Activated CD4-positive, alpha-beta T cell treated with anti-CD3 and anti-CD28 coated beads for 36 hours (primary cell): ENCODE measurements at regions of chr13 and their contacts with region 1.

Region 1: GRCh38 chr13:45718063-45718462 is 15.9 kb downstream of the CBY2 start:
- DNase-seq: no peak
- ATAC-seq: peak; percentile 65
- H3K4me3 Mint-ChIP-seq: no peak overlapping the region
- H3K27ac Mint-ChIP-seq: no peak overlapping the region
- H3K4me1 Mint-ChIP-seq: no peaks in the 10 kb centered on the region
- H3K27me3 Mint-ChIP-seq: no peaks in the 10 kb centered on the region

Region 2: DNA sequence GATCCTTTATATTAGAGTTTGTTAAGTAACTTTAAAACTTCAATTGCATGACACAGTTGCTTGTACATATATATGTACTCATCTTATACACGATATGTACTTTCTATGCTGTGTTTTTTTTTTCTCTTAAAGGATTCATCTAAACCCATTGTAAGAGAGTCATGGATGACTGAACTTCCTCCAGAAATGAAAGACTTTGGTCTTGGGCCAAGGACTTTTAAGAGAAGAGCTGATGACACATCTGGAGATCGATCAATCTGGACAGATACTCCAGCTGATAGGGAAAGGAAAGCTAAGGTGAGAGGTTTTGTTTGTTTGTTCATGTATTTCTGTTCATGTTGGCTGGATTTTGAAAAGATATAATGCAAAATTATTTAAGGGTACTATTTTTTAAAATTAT is 702.8 kb before region 1 on chr13:
- CTCF ChIA-PET with region 1: no interaction called
- POLR2A ChIA-PET with region 1: no interaction called
- intact Hi-C with region 1: no loop called
- DNase-seq: no peak
- ATAC-seq: no peak
- H3K4me3 Mint-ChIP-seq: no peak overlapping the region
- H3K27ac Mint-ChIP-seq: peak overlapping the region; percentile 15
- H3K4me1 Mint-ChIP-seq: peaks cover 7% of the 10 kb centered on the region
- H3K27me3 Mint-ChIP-seq: no peaks in the 10 kb centered on the region

Region 3: DNA sequence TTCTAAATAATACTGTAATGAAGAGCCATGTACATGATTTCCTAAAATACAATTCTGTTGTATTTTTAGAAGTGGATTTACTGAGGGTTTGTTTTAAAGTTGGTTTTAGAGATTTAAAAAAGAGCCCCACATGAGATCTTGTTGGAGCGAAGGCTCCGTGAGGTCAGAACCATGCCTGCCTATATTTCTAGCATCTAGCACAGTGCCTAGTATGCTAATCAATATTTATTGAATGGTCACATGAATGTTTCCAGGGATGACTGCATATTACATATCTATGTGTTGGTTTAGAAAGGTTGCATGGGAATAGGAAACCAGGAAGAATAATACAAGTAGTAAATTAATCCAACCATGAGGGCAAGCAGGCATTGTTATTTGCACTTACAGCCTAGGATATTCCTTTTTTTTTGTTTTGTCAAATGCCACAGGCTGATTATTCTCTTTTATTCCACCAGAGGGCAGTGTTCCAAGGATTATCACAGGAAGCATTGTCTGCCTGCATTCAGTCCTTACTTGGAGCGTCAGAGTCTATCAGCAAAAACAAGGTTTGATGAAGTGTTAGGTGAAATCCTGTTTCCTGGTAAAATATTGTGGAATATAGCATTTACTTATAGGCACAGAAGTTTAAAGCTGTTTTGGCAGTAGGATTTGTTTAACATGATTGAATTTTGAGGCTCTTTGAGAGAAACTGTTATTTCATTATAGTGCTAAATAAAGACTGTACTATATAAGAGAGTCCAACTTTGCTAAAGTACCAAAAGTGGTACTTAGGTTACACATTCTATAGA is 206.6 kb before region 1 on chr13:
- CTCF ChIA-PET with region 1: interaction called, 5 read pairs
- POLR2A ChIA-PET with region 1: no interaction called
- intact Hi-C with region 1: loop called (anchors 1 to 5 kb)
- DNase-seq: peak; percentile 25
- ATAC-seq: peak; percentile 89
- H3K4me3 Mint-ChIP-seq: no peak overlapping the region
- H3K27ac Mint-ChIP-seq: peak overlapping the region; percentile 66
- H3K4me1 Mint-ChIP-seq: peaks cover 14% of the 10 kb centered on the region
- H3K27me3 Mint-ChIP-seq: no peaks in the 10 kb centered on the region

Region 4: GRCh38 chr13:45700971-45701900 is 16.8 kb before region 1 on chr13:
- CTCF ChIA-PET with region 1: interaction called, 10 read pairs
- POLR2A ChIA-PET with region 1: no interaction called
- intact Hi-C with region 1: no loop called
- DNase-seq: peak; percentile 41
- ATAC-seq: peak; percentile 89
- H3K4me3 Mint-ChIP-seq: peak overlapping the region; percentile 4
- H3K27ac Mint-ChIP-seq: peak overlapping the region; percentile 84
- H3K4me1 Mint-ChIP-seq: peaks cover 30% of the 10 kb centered on the region
- H3K27me3 Mint-ChIP-seq: peaks cover 7% of the 10 kb centered on the region